ENCODE measurements at regions of chr1 and their contacts with region 1.

Region 1: DNA sequence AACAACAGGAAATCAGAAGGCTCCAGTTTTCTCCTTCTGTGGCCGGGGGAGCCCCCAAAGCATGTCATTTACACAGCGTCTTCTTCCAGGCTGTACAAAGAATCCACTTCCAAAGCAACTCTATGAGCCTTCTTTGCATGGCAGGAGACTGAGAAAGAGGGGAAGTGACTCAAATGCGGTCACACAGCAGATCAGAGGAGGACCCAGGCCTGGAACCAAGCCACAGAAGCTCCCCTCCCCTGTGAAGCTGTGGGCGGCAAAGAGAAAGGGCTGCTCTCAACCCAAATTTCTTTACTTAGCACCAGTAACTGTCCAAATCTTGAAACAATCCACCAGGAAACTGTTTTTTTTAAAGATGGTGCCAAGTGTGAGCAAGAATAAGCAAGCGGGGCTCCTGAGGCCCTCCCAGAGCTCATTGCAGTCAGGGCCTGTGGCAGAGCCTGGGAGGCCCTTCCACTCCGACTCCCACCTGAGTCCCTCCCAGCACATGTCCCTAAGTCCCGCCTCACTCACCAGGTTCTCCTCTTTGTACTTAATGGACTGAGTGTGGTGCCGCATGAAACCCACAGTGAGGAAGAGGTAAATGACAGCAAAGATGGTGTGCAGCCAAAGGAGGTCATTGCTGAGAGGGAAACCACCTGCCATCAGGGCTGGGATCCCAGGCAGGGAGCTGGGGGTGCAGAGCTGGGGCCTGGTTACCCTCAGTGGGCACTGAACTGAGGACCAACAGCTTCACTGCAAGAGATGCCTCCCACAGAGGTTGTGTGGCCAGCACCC is 15.9 kb downstream of the TMEM63A start:
- DNase-seq: peak in 8 of 9 experiments; percentile 57 to 87 (median 78)
- ATAC-seq: peak; percentile 88
- H3K4me3 ChIP-seq: no peak overlapping the region
- H3K4me3 Mint-ChIP-seq: peak overlapping the region; percentile 55
- H3K27ac ChIP-seq: peak overlapping the region; percentile 27 to 54
- H3K27ac Mint-ChIP-seq: peak overlapping the region; percentile 92
- H3K4me1 ChIP-seq: peaks cover 30% of the 10 kb centered on the region
- H3K4me1 Mint-ChIP-seq: peaks cover 51% of the 10 kb centered on the region
- H3K27me3 ChIP-seq: no peaks in the 10 kb centered on the region
- H3K27me3 Mint-ChIP-seq: no peaks in the 10 kb centered on the region
- CTCF ChIP-seq: no peak

Region 2: DNA sequence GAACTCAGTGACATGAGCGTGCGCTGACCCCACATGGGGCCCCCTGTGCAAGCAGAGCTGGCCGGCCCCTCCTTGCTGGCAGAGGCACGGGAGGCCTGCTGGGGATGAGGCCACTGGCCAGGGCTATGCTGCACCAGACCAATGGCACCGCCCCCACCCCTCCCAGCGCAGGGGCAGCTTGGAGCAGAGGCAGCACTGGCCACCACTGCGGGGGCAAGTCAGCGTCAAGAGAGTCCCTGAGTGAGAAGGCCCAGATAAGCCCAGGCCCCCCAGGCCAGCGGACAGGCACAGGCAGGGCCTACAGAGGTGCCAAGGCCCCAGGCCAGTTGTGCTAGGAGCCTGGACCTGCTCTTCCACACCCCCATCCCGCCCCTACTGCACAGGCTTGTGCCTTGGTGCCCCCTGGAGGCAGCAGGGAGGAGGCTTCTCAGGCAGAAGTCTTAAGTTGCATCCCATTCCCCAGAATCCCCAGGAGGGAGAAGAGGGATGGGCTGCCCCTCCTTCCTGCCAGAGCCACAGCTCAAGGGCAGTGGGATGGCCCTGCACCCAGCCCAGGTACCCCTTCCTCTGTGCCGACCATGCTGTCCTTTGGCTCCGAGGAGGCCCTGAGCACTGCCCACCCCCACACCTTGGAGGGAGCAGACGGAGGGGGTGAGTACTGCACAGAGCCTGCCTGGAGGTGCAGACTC is 20.5 kb before region 1 on chr1:
- CTCF ChIA-PET with region 1: interaction called, 4 read pairs
- POLR2A ChIA-PET with region 1: interaction called, 6 read pairs
- intact Hi-C with region 1: loop called in 1 of 2 experiments (anchors 2 kb)
- DNase-seq: peak in 5 of 9 experiments; percentile 27 to 51 (median 39)
- ATAC-seq: no peak
- H3K4me3 ChIP-seq: no peak overlapping the region
- H3K4me3 Mint-ChIP-seq: no peak overlapping the region
- H3K27ac ChIP-seq: no peak overlapping the region
- H3K27ac Mint-ChIP-seq: peak overlapping the region; percentile 52
- H3K4me1 ChIP-seq: peaks cover 54% of the 10 kb centered on the region
- H3K4me1 Mint-ChIP-seq: peaks cover 64% of the 10 kb centered on the region
- H3K27me3 ChIP-seq: no peaks in the 10 kb centered on the region
- H3K27me3 Mint-ChIP-seq: no peaks in the 10 kb centered on the region
- CTCF ChIP-seq: peak; percentile 16

Region 3: DNA sequence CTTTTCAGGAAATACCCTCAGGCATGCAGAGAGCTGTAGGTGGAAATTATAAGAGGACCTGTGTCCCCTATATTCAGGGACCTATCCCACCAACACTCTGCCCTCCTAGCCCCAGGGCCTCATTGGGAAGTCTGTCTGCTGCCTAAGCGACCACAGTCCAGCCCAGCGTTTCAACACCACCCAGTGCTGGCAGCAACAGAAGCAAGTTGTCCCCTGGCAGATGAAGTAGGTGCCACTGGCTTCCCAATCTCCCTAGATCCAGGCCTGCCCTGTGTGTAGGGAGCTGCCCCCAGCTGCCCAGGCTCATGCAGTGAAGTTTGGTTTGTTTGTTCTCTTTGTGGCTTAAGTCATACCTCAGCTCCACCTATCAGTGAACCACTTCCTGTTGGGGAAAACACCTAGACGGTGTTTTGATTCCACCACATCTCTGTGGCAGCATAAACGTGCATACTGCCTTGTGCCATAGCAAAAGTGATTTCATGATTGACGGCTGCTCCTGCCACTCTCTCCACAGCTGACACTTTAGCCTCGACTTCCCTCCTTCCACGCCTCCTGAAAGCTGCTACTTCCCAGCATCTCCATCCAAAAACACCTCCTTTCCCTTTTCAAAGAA is 30.8 kb after region 1 on chr1:
- CTCF ChIA-PET with region 1: no interaction called
- POLR2A ChIA-PET with region 1: interaction called, 15 read pairs
- intact Hi-C with region 1: loop called (anchors 1 kb)
- DNase-seq: peak; percentile 46 to 96 (median 71)
- ATAC-seq: peak; percentile 90
- H3K4me3 ChIP-seq: peak overlapping the region; percentile 18 to 38
- H3K4me3 Mint-ChIP-seq: peak overlapping the region; percentile 74
- H3K27ac ChIP-seq: peak overlapping the region; percentile 72 to 80
- H3K27ac Mint-ChIP-seq: peak overlapping the region; percentile 99
- H3K4me1 ChIP-seq: peaks cover 42% of the 10 kb centered on the region
- H3K4me1 Mint-ChIP-seq: peaks cover 56% of the 10 kb centered on the region
- H3K27me3 ChIP-seq: no peaks in the 10 kb centered on the region
- H3K27me3 Mint-ChIP-seq: no peaks in the 10 kb centered on the region
- CTCF ChIP-seq: no peak

Region 4: DNA sequence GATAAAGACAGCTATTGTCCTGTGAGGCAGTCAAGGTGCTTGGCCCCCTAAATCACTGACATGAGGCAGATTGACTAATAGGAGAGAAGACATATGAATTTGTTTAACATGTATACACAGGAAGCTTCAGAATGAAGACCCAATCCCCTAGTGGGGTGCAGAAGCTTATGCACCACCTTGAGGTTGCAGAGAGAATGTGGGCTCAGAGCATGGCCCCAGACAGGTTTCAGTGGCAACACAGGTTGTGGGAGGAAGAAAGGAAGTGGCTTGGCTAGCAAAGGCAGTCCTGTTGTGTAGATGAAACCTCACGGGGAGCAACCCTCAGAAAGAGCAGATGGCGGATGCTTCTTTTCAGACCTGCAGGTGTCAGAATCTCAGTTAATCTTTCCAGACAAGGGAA is 578.7 kb after region 1 on chr1:
- CTCF ChIA-PET with region 1: no interaction called
- POLR2A ChIA-PET with region 1: no interaction called
- intact Hi-C with region 1: no loop called
- DNase-seq: peak; percentile 35 to 88 (median 68)
- ATAC-seq: peak; percentile 99
- H3K4me3 ChIP-seq: no peak overlapping the region
- H3K4me3 Mint-ChIP-seq: peak overlapping the region; percentile 12
- H3K27ac ChIP-seq: peak overlapping the region in 1 of 2 experiments; percentile 7
- H3K27ac Mint-ChIP-seq: peak overlapping the region; percentile 80
- H3K4me1 ChIP-seq: peaks cover 34% of the 10 kb centered on the region
- H3K4me1 Mint-ChIP-seq: peaks cover 35% of the 10 kb centered on the region
- H3K27me3 ChIP-seq: no peaks in the 10 kb centered on the region
- H3K27me3 Mint-ChIP-seq: no peaks in the 10 kb centered on the region
- CTCF ChIP-seq: peak; percentile 44

Measured in CD8-positive, alpha-beta T cell (primary cell).